ENCODE measurements at regions of chr1 and their contacts with region 1.

Region 1: GRCh38 chr1:19311959-19312781 is at the starts of genes AKR7A2 and SLC66A1:
- DNase-seq: peak; percentile 78 to 96 (median 87)
- ATAC-seq: peak; percentile 98
- H3K4me3 ChIP-seq: peak within 1 kb of the TSS; percentile 90
- H3K4me3 Mint-ChIP-seq: peak within 1 kb of the TSS; percentile 95
- H3K27ac ChIP-seq: peak within 1 kb of the TSS in 1 of 2 donors; percentile 22
- H3K27ac Mint-ChIP-seq: peak within 1 kb of the TSS; percentile 55
- H3K4me1 ChIP-seq: peaks cover 45% of the 10 kb centered on the region
- H3K4me1 Mint-ChIP-seq: peaks cover 35% of the 10 kb centered on the region
- H3K27me3 ChIP-seq: no peaks in the 10 kb centered on the region
- H3K27me3 Mint-ChIP-seq: no peaks in the 10 kb centered on the region
- CTCF ChIP-seq: no peak
- total RNA-seq, gene AKR7A2: 11.1 to 11.8 TPM
- total RNA-seq, gene SLC66A1: 2.3 to 3.7 TPM

Region 2: DNA sequence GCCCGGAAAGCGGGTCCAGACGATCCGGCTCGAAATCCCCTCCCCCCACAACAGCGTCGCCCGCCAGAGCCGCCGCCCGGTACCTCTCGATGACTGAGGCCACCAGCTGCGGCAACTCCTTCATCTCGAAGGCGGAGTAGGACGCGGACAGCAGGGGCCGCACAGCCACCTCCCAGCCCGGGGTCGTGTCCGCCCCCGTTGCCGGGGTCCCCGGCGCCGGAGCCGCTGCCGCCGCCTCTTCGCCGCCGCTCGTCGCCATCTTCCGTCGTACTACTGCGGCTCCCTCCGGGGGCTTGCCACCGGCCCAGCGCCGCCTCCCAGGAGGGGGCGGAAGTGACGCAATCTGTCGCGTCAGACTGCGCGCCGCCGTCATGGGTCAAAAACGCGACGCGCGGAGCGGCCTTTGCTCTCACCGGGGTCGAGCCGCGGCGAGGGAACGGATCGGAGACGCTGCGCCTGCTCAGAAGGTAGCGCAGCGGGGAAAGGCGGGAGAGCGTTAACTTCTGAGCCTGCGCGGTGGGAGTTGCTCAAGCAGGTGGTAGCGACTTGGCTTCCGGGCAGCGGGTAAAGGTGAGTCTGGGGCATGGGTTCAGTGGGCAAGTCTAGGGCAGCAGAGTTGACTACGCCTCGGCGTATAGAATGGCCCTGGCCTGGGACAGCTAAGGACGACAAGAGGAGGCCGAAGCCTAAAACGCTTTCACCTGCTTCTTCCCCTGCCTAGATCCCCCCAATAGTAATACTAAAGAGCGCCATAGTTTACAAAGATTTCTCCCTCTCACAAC is 102.0 kb before region 1 on chr1 and contains the start of gene UBR4:
- CTCF ChIA-PET with region 1: no interaction called
- POLR2A ChIA-PET with region 1: no interaction called
- intact Hi-C with region 1: loop called in 1 of 2 experiments (anchors 2 kb)
- DNase-seq: peak; percentile 92 to 99 (median 96)
- ATAC-seq: peak; percentile 92
- H3K4me3 ChIP-seq: peak within 1 kb of the TSS; percentile 93
- H3K4me3 Mint-ChIP-seq: peak within 1 kb of the TSS; percentile 96
- H3K27ac ChIP-seq: peak within 1 kb of the TSS; percentile 87 to 92
- H3K27ac Mint-ChIP-seq: peak within 1 kb of the TSS; percentile 95
- H3K4me1 ChIP-seq: peaks cover 42% of the 10 kb centered on the region
- H3K4me1 Mint-ChIP-seq: peaks cover 77% of the 10 kb centered on the region
- H3K27me3 ChIP-seq: no peaks in the 10 kb centered on the region
- H3K27me3 Mint-ChIP-seq: no peaks in the 10 kb centered on the region
- CTCF ChIP-seq: no peak
- total RNA-seq, gene UBR4: 116 to 125 TPM

Measured in CD4-positive, alpha-beta T cell (primary cell).